Common myeloid progenitor, CD34-positive (primary cell): ENCODE measurements at regions of chr4 and their contacts with region 1.

Region 1: DNA sequence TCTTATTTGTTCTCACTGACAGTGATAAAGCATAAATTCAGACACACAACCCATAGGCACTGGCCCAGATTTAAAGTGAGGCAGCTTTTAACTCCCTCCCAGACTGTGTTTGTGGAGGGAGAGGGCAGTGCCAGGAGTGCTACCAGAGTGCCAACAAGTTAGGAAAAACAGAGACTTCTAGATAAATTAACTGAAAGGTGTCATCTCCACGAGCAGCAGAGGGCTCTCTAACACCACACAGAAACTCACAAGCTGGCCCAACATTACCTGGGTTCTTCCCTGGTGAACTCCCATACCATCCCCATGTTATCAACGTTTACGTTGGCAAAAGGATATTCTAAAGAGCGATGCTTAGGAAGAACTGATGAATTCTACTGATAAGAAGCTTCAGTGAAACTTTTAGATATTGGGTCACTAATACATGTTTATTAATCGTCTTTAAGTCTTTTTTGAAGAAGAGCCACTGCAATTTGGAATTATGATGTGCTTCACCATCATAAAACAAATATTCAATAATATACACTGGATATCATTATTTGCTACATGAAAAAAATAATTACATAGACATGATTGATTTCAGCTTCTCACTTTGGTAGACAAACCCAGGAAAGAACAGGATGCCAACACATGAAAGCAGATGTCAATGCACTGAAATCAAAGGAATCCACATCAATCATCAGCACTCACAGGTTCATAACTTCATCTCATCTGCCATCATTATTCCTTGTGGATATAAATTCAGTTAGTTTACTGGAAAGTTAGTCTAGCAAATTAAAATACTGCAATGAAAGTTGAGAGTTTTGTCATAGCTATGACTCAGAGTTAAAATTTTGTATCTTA is 121.2 kb upstream of the NAP1L5 start:
- DNase-seq: peak; percentile 60 to 68 (median 62)
- H3K4me3 ChIP-seq: no peak overlapping the region
- H3K27ac ChIP-seq: peak overlapping the region in 1 of 2 experiments; percentile 45
- H3K4me1 ChIP-seq: peaks cover 15 to 30% (median 20%) of the 10 kb centered on the region in 4 experiments
- H3K27me3 ChIP-seq: no peaks in the 10 kb centered on the region

Region 2: DNA sequence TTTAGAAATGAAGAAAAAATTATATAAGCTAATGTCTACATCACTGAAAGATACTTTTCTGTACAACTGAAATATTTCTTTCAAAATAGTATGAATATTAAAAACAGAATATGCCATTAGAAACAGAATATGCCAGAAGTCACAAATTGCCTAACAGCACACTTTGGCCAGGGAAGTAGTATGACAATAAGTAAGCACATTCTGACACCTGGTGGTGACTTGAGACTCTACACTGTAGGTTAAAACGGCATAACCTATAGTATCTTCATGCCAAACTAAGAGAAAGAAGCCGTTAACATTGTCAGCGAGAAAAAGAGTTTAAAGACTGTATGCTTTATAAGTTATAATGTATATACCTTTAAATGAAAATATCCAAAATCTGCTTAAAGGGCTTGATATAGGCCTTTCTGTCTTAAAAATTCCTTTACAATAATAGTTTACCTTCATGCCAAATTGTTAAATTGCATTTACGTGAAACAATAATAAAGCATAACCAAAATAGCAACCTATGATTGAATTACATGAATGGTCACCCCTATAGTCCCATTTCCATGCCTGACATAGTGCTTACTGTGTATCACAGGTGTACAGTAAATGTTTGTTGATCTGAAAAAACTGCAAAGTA is 205.3 kb after region 1 on chr4:
- CTCF ChIA-PET with region 1: interaction called, 282 read pairs
- POLR2A ChIA-PET with region 1: interaction called, 8 read pairs
- DNase-seq: peak; percentile 78 to 88 (median 84)
- H3K4me3 ChIP-seq: peak overlapping the region in 1 of 7 experiments; percentile 19
- H3K27ac ChIP-seq: no peak overlapping the region
- H3K4me1 ChIP-seq: no peaks in the 10 kb centered on the region
- H3K27me3 ChIP-seq: no peaks in the 10 kb centered on the region